Gastrocnemius medialis (tissue), 4 donors: ENCODE measurements at regions of chr16 and their contacts with region 1.

Region 1: DNA sequence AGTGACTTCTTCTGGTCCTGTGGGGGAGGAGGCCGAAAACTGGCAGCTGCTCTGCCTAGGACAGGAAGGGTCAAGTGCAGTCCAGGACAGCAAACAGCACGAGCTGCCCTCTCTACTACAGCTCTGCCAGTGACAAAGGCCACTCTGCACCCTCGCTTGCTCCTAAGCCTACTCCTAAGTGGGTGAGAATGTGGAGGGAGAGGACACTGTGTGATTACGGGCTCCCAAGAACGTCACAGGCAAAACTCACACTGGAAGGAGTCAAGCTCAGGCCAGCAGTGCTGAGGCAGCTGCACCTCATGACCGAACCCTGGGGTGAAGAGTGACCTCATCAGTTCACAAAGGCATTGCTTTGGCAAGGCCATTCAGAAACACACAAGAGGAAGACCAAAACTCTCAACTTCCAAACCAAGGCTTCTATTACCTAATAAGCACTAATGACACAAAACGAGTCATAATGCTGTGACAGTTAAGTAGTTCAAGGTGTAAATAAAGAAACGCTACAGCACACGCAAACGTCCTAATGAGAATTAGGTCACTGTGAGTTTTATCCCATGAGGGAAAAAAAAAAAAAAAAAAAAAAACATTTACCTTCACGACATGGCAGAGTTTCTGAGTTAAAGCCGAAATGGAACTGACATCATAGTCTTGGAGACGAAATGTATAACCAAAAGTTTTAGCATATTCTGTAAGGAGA is 35.1 kb downstream of the MARF1 start:
- DNase-seq: peak; percentile 94 to 97
- ATAC-seq: peak; percentile 87 to 91
- H3K4me3 ChIP-seq: no peak overlapping the region
- H3K27ac ChIP-seq: peak overlapping the region; percentile 81 to 92 (median 89)
- H3K4me1 ChIP-seq: peaks cover 53% of the 10 kb centered on the region in 2 donors
- H3K27me3 ChIP-seq: no peaks in the 10 kb centered on the region
- CTCF ChIP-seq: no peak
- POLR2A ChIP-seq: peak; percentile 40 to 67

Region 2: DNA sequence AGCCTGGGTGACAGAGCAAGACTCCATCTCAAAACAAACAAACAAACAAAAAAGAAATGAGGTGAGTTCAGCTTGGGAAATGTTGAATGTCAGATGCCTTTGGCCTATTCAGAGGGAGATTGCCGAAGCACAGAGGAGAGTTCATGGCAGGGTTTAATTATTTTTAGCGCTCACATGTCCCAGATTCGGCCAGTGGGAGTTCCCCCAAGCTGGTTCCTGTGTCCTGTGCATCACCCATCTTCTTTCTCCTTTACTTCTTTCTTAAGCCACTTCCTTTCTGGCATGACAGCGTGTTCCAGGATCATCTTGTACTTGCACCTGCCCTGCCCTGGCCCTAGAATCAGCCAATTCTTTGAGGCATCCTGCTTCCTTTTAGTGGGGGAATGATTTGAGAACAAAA is 203.1 kb before region 1 on chr16:
- in situ Hi-C with region 1: no loop called
- intact Hi-C with region 1: loop called (anchors 2 kb)
- DNase-seq: peak; percentile 92 to 94
- ATAC-seq: peak; percentile 92 to 94
- H3K4me3 ChIP-seq: no peak overlapping the region
- H3K27ac ChIP-seq: peak overlapping the region; percentile 95 to 97 (median 96)
- H3K4me1 ChIP-seq: peaks cover 17 to 34% of the 10 kb centered on the region in 2 donors
- H3K27me3 ChIP-seq: no peaks in the 10 kb centered on the region
- CTCF ChIP-seq: no peak
- POLR2A ChIP-seq: no peak

Region 3: DNA sequence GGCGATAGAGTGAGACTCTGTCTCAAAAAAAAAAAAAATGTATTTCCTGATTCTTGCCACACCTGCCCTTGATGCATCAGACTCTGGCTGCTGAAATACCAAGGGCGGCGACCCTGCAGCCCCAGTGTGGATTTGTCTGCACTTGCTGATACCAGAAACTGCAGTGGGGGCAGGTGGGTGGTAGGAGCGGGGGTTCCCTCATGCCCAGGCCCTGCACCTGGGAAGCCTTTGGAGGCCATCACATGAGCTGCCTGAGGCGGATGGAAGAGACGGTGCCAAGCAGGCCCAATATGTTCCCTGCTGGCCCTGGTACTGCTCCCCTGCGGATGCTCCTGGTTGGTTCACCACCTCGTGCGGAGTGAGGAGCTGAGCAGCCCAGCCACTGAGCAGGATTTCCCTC is 15.5 kb before region 1 on chr16:
- in situ Hi-C with region 1: no loop called
- intact Hi-C with region 1: loop called (anchors 1 kb)
- DNase-seq: no peak
- ATAC-seq: no peak
- H3K4me3 ChIP-seq: no peak overlapping the region
- H3K27ac ChIP-seq: peak overlapping the region; percentile 7 to 58 (median 39)
- H3K4me1 ChIP-seq: peaks cover 9 to 18% of the 10 kb centered on the region in 2 donors
- H3K27me3 ChIP-seq: no peaks in the 10 kb centered on the region
- CTCF ChIP-seq: no peak
- POLR2A ChIP-seq: no peak

Region 4: GRCh38 chr16:15777533-15778203 is 169.8 kb after region 1 on chr16:
- in situ Hi-C with region 1: no loop called
- intact Hi-C with region 1: no loop called
- DNase-seq: no peak
- ATAC-seq: no peak
- H3K4me3 ChIP-seq: no peak overlapping the region
- H3K27ac ChIP-seq: no peak overlapping the region
- H3K4me1 ChIP-seq: no peaks in the 10 kb centered on the region
- H3K27me3 ChIP-seq: no peaks in the 10 kb centered on the region
- CTCF ChIP-seq: peak in 3 of 5 experiments; percentile 6 to 30 (median 20)
- POLR2A ChIP-seq: no peak